ENCODE measurements at regions of chr21 and their contacts with region 1.

Region 1: DNA sequence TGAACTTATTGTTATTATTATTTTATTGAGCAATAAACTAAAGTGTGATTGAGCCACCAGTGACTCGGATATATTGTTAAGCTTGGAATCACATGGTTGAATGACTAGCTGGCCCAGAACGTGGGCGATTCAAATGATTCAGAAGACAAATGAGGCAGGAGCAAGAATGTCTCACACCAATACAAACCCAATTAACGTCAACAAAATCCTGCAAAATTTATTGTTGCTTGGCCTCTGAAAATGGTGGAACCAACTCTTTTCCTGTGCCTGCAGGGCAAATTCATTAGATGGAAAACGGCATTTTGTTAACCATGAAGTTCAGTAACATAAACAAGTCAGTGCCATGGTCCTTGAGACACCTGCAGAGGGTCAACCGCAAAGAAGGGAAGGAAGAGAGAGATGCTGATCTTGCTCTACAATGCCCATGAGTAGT is 482.0 kb downstream of the SETD4 start:
- DNase-seq: no peak
- ATAC-seq: no peak
- H3K4me3 Mint-ChIP-seq: no peak overlapping the region
- H3K27ac Mint-ChIP-seq: peak overlapping the region; percentile 89
- H3K4me1 Mint-ChIP-seq: peaks cover 27% of the 10 kb centered on the region
- H3K27me3 Mint-ChIP-seq: peaks cover 10% of the 10 kb centered on the region

Region 2: DNA sequence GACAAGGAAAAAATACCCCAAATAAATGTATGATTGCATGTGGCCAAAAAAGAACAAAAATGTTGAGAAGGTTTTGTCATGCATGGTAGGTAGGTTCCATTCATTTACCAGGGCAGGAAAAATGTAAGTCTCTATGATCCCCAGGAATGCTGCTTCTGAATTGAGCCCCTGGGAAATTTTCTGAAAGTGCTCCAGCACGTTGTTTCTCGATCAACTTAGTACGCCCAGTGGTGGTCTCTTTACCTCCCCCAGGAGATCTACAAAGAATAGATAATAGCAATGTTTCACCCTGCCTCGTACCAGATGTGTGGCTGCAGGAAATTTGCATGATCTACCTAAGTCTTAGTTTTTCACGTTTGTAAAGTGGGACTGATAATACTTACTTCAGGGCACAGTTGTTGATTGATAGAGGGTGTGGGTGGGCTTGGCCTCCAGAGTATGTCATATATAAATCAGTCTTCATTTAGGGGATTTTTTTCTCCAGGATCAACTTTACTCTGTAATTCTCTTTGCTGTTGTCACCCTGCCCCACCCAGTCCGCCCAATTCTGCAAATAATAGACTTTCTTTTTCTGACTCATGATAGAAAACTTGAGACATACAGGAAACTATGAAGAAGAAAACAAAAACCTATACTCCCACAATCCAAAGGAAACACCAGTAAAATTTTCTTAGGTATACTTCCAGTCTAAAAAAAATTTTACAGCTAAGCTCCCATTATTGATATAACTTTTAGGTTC is 67.2 kb before region 1 on chr21:
- CTCF ChIA-PET with region 1: no interaction called
- POLR2A ChIA-PET with region 1: no interaction called
- intact Hi-C with region 1: no loop called
- DNase-seq: peak; percentile 51
- ATAC-seq: peak; percentile 88
- H3K4me3 Mint-ChIP-seq: no peak overlapping the region
- H3K27ac Mint-ChIP-seq: peak overlapping the region; percentile 64
- H3K4me1 Mint-ChIP-seq: peaks cover 35% of the 10 kb centered on the region
- H3K27me3 Mint-ChIP-seq: no peaks in the 10 kb centered on the region

Region 3: DNA sequence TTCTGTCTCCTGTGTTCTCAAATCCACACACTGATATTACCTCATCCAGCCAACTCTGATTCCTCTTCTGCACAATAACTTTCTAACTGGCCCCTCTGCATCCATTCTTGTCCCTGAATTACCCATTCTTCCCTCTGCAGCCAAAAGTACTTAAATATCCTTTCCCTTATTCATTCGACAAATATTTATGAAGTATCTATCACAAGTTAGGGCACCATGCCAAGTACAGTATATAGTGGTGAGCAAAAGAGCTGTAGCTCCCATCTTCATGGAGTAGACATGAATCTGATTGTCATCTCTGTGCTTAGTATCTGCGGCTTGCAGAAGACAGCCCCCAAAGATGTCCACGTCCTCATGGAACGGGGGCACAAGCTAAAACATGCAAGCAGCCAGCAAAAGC is 165.2 kb after region 1 on chr21:
- CTCF ChIA-PET with region 1: no interaction called
- POLR2A ChIA-PET with region 1: no interaction called
- intact Hi-C with region 1: loop called in 1 of 2 experiments (anchors 2 kb)
- DNase-seq: no peak
- ATAC-seq: no peak
- H3K4me3 Mint-ChIP-seq: no peak overlapping the region
- H3K27ac Mint-ChIP-seq: no peak overlapping the region
- H3K4me1 Mint-ChIP-seq: peaks cover 17% of the 10 kb centered on the region
- H3K27me3 Mint-ChIP-seq: peaks cover 26% of the 10 kb centered on the region

Measured in activated CD4-positive, alpha-beta T cell treated with anti-CD3 and anti-CD28 coated beads for 36 hours (primary cell).